ENCODE measurements at regions of chr13 and their contacts with region 1.

Region 1: GRCh38 chr13:88107570-88107969 is 436.4 kb downstream of the SLITRK5 start:
- DNase-seq: no peak
- H3K4me3 ChIP-seq: no peak overlapping the region
- H3K27ac ChIP-seq: no peak overlapping the region
- H3K4me1 ChIP-seq: no peaks in the 10 kb centered on the region
- H3K27me3 ChIP-seq: no peaks in the 10 kb centered on the region
- CTCF ChIP-seq: no peak
- EP300 ChIP-seq: no peak
- POLR2A ChIP-seq: no peak

Region 2: GRCh38 chr13:88125055-88125454 is 17.5 kb after region 1 on chr13:
- intact Hi-C with region 1: loop called in 1 of 4 experiments (anchors 1 kb)
- DNase-seq: no peak
- H3K4me3 ChIP-seq: no peak overlapping the region
- H3K27ac ChIP-seq: no peak overlapping the region
- H3K4me1 ChIP-seq: no peaks in the 10 kb centered on the region
- H3K27me3 ChIP-seq: no peaks in the 10 kb centered on the region
- CTCF ChIP-seq: no peak
- EP300 ChIP-seq: no peak
- POLR2A ChIP-seq: no peak